CD8-positive, alpha-beta T cell (primary cell): ENCODE measurements at regions of chr13 and their contacts with region 1.

Region 1: GRCh38 chr13:97975848-97976609 is 22.6 kb downstream of the IPO5 start:
- DNase-seq: peak; percentile 77 to 95 (median 88)
- ATAC-seq: peak; percentile 92
- H3K4me3 ChIP-seq: peak overlapping the region; percentile 89 to 92
- H3K4me3 Mint-ChIP-seq: peak overlapping the region; percentile 94
- H3K27ac ChIP-seq: peak overlapping the region; percentile 73 to 82
- H3K27ac Mint-ChIP-seq: peak overlapping the region; percentile 93
- H3K4me1 ChIP-seq: peaks cover 21% of the 10 kb centered on the region
- H3K4me1 Mint-ChIP-seq: peaks cover 42% of the 10 kb centered on the region
- H3K27me3 ChIP-seq: no peaks in the 10 kb centered on the region
- H3K27me3 Mint-ChIP-seq: no peaks in the 10 kb centered on the region
- CTCF ChIP-seq: no peak

Region 2: DNA sequence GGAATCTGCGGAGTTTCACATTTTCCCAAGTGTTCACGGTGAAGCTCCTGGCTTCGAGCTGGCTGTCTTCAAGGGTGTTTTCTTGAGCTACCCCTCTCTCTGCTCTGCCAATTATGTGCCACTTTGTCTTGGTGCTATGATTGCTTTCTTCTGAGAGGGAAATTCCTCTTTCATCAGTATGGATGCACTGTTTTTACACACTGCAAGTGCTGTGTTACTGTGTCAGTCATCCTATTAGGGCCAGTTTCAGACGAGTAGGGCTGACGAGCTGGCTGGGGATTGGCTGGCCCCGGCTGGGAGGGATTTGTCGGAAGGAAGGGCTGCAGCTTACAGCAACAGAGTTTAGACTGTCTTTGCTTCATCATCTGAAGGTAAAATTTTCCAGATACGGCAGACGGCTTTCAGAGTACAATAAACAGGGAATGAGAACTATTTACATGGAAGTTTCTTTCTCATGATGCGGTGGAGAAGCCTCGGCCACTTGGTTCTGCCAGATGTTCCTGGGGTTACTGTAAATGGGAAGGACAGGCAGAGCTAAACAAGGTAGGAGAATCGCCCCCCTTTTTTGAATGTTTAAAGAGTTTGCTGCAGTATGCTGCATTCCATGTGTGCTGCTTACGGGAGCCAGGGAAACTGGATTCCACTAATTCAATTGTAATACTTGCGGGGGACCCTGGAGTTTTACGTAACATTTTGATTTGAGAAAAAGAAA is 753.9 kb before region 1 on chr13 and contains the start of gene MBNL2:
- CTCF ChIA-PET with region 1: no interaction called
- POLR2A ChIA-PET with region 1: no interaction called
- intact Hi-C with region 1: loop called (anchors 10 kb)
- DNase-seq: peak; percentile 72 to 93 (median 85)
- ATAC-seq: peak; percentile 97
- H3K4me3 ChIP-seq: peak within 1 kb of the TSS; percentile 57 to 76
- H3K4me3 Mint-ChIP-seq: peak within 1 kb of the TSS; percentile 88
- H3K27ac ChIP-seq: peak within 1 kb of the TSS; percentile 81 to 86
- H3K27ac Mint-ChIP-seq: peak within 1 kb of the TSS; percentile 93
- H3K4me1 ChIP-seq: peaks cover 39% of the 10 kb centered on the region
- H3K4me1 Mint-ChIP-seq: peaks cover 42% of the 10 kb centered on the region
- H3K27me3 ChIP-seq: no peaks in the 10 kb centered on the region
- H3K27me3 Mint-ChIP-seq: no peaks in the 10 kb centered on the region
- CTCF ChIP-seq: no peak
- total RNA-seq, gene MBNL2: 31.2 to 33.2 TPM

Region 3: GRCh38 chr13:98476538-98476966 is 500.5 kb after region 1 on chr13:
- CTCF ChIA-PET with region 1: no interaction called
- POLR2A ChIA-PET with region 1: no interaction called
- intact Hi-C with region 1: loop called in 1 of 2 experiments (anchors 10 kb)
- DNase-seq: peak; percentile 57 to 95 (median 87)
- ATAC-seq: peak; percentile 90
- H3K4me3 ChIP-seq: peak overlapping the region in 1 of 2 experiments; percentile 20
- H3K4me3 Mint-ChIP-seq: peak overlapping the region; percentile 67
- H3K27ac ChIP-seq: peak overlapping the region; percentile 44 to 58
- H3K27ac Mint-ChIP-seq: peak overlapping the region; percentile 94
- H3K4me1 ChIP-seq: peaks cover 44% of the 10 kb centered on the region
- H3K4me1 Mint-ChIP-seq: peaks cover 66% of the 10 kb centered on the region
- H3K27me3 ChIP-seq: no peaks in the 10 kb centered on the region
- H3K27me3 Mint-ChIP-seq: no peaks in the 10 kb centered on the region
- CTCF ChIP-seq: no peak

Region 4: GRCh38 chr13:98570929-98571372 is 594.9 kb after region 1 on chr13:
- CTCF ChIA-PET with region 1: no interaction called
- POLR2A ChIA-PET with region 1: no interaction called
- intact Hi-C with region 1: loop called (anchors 5 to 10 kb)
- DNase-seq: peak in 5 of 9 experiments; percentile 32 to 70 (median 52)
- ATAC-seq: peak; percentile 62
- H3K4me3 ChIP-seq: peak overlapping the region; percentile 51 to 55
- H3K4me3 Mint-ChIP-seq: peak overlapping the region; percentile 90
- H3K27ac ChIP-seq: peak overlapping the region; percentile 46 to 68
- H3K27ac Mint-ChIP-seq: peak overlapping the region; percentile 97
- H3K4me1 ChIP-seq: peaks cover 88% of the 10 kb centered on the region
- H3K4me1 Mint-ChIP-seq: peaks cover 93% of the 10 kb centered on the region
- H3K27me3 ChIP-seq: no peaks in the 10 kb centered on the region
- H3K27me3 Mint-ChIP-seq: no peaks in the 10 kb centered on the region
- CTCF ChIP-seq: no peak

Region 5: GRCh38 chr13:99600318-99600717 is 1624.3 kb after region 1 on chr13:
- CTCF ChIA-PET with region 1: no interaction called
- POLR2A ChIA-PET with region 1: no interaction called
- intact Hi-C with region 1: loop called in 1 of 2 experiments (anchors 5 kb)
- DNase-seq: peak in 3 of 9 experiments; percentile 15 to 56 (median 35)
- ATAC-seq: peak; percentile 67
- H3K4me3 ChIP-seq: no peak overlapping the region
- H3K4me3 Mint-ChIP-seq: no peak overlapping the region
- H3K27ac ChIP-seq: no peak overlapping the region
- H3K27ac Mint-ChIP-seq: peak overlapping the region; percentile 69
- H3K4me1 ChIP-seq: peaks cover 20% of the 10 kb centered on the region
- H3K4me1 Mint-ChIP-seq: peaks cover 29% of the 10 kb centered on the region
- H3K27me3 ChIP-seq: no peaks in the 10 kb centered on the region
- H3K27me3 Mint-ChIP-seq: no peaks in the 10 kb centered on the region
- CTCF ChIP-seq: peak; percentile 29

Region 6: GRCh38 chr13:99606324-99607066 is 1630.5 kb after region 1 on chr13:
- CTCF ChIA-PET with region 1: no interaction called
- POLR2A ChIA-PET with region 1: no interaction called
- intact Hi-C with region 1: loop called (anchors 2 to 5 kb)
- DNase-seq: peak; percentile 82 to 95 (median 91)
- ATAC-seq: peak; percentile 93
- H3K4me3 ChIP-seq: peak within 1 kb of the TSS; percentile 89 to 93
- H3K4me3 Mint-ChIP-seq: peak within 1 kb of the TSS; percentile 92
- H3K27ac ChIP-seq: peak within 1 kb of the TSS; percentile 72 to 81
- H3K27ac Mint-ChIP-seq: peak within 1 kb of the TSS; percentile 92
- H3K4me1 ChIP-seq: peaks cover 23% of the 10 kb centered on the region
- H3K4me1 Mint-ChIP-seq: peaks cover 45% of the 10 kb centered on the region
- H3K27me3 ChIP-seq: no peaks in the 10 kb centered on the region
- H3K27me3 Mint-ChIP-seq: no peaks in the 10 kb centered on the region
- CTCF ChIP-seq: no peak